ENCODE measurements at regions of chr3 and their contacts with region 1.

Region 1: DNA sequence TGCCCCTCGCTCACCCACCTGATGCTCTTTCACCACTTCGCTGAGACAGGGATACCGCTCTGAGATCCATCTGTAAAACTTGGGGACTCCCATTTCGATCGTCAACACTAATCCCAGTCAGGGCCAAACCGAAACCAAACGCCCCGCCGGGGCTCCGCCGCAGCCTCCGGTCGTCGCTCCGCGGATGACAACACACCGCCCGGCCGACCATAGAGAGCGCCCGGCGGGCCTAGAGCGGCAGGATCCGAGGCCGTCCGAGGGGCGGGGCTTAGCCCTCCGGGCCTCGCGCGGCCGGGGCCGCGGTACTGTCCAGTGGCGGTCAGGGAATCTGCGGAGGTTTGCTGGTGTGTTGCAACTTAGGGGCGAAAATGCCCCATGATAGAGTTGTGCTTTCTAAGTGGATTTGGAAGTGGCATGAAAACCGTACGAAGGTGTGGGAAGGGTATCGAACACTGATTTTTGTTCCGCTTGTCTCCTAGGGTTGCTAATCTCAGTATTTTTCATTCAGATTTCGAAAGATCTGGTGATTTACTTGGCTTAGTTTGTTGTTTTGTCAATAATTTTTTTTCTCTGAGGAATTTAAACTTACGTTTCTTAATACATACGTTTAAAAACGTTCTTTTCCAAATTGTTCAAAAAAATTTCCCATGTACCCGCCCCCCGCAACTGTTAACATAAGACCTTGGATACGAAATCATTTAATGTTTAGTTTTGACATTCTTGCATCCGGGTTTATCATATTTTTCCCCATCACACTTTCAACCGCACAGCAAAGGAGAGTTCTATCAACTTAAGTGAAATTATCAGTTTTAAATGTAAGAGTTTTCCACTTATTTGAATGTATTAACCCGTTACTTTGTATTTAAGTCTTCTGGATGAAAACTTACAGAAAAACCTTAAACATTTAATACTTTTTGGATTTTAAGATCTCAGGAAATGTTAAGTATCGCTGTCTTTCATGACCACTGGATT is at the start of gene XRN1:
- DNase-seq: peak; percentile 98
- ATAC-seq: peak; percentile 85
- H3K4me3 Mint-ChIP-seq: peak within 1 kb of the TSS; percentile 95
- H3K27ac Mint-ChIP-seq: peak within 1 kb of the TSS; percentile 98
- H3K4me1 Mint-ChIP-seq: peaks cover 32% of the 10 kb centered on the region
- H3K27me3 Mint-ChIP-seq: no peaks in the 10 kb centered on the region
- total RNA-seq, gene XRN1: 54.2 to 117 TPM

Region 2: DNA sequence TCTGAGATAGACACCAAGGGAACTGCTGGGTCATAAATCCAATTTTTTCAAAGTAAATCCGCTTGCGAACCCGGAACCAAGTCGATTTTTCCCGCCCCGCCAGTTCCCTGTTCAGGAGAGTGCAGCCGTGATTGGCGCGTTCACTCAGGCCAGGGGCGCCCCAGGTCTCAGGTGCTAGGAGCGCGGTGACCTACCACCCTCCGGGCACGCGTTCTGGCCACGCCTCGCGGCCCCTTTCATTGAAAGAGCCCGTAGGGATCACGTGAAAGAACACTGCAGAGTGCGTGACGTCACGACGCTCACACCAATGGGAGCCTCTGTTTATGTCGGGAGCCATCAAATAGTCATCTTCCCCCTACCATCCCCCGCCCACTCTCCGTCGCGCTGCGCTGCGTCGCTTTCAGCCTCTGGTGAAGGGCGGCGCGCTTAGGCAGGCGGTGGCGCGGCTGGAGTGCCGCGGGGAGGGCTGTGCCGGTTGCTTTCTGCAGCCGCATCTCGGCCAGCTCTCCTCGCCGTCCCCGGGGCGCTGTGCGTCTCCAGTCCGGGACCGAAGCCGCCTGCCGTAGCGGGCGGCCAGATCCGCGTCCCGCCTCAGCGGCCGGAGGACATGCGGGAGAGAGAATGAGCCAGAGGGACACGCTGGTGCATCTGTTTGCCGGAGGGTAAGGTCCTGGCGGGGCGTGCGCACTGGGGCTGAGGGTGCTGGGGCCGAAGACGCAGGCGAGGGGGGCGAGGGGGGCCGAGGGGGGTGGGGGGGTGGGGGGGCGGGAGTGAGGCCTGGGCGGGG is 1506.5 kb before region 1 on chr3 and contains the start of gene SLC25A36:
- CTCF ChIA-PET with region 1: no interaction called
- POLR2A ChIA-PET with region 1: no interaction called
- intact Hi-C with region 1: loop called in 1 of 2 experiments (anchors 5 kb)
- DNase-seq: peak; percentile 99
- ATAC-seq: peak; percentile 98
- H3K4me3 Mint-ChIP-seq: peak within 1 kb of the TSS; percentile 93
- H3K27ac Mint-ChIP-seq: peak within 1 kb of the TSS; percentile 95
- H3K4me1 Mint-ChIP-seq: peaks cover 37% of the 10 kb centered on the region
- H3K27me3 Mint-ChIP-seq: no peaks in the 10 kb centered on the region
- total RNA-seq, gene SLC25A36: 42.3 to 62.3 TPM

Region 3: DNA sequence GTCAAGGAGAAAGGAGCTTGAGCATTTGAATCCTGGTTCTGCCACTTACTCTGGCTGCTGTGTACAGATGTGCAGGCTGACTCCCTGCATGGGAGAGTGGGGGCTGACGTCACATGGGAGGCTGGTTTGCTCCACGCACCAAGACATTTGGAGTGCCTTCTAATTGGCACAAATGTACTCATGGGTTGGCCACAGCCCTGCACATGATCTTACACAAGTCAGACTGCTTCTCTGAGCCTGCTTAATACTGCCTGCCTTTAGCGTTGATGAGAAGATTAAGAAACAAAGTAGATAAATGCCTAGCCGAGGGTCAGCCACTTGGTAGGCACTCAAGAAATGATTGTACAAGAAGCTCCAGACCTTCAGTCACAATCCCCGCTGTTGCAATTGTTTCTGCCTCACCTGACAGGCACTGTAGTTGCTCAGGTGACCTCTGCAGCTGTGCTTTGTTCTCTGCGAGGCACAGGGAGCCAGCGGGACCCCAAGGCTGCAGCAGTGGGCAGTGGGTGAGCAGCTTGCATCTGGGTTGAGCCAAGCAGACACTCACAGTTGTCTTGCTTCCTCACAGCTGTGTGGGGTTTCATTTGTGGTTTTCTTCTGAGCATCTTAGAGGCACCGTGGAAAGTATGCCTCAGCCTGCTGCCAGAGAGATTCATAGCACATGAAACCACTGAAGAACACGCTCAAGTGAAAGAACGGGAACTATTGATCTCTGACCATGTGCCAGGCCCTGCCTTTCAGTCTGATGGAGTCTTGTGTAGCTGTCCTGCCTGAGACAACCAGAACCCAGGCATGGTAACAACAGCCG is 651.9 kb before region 1 on chr3:
- CTCF ChIA-PET with region 1: no interaction called
- POLR2A ChIA-PET with region 1: no interaction called
- intact Hi-C with region 1: loop called in 1 of 2 experiments (anchors 2 kb)
- DNase-seq: peak; percentile 90
- ATAC-seq: peak; percentile 84
- H3K4me3 Mint-ChIP-seq: peak overlapping the region; percentile 77
- H3K27ac Mint-ChIP-seq: peak overlapping the region; percentile 97
- H3K4me1 Mint-ChIP-seq: peaks cover 52% of the 10 kb centered on the region
- H3K27me3 Mint-ChIP-seq: no peaks in the 10 kb centered on the region

Region 4: DNA sequence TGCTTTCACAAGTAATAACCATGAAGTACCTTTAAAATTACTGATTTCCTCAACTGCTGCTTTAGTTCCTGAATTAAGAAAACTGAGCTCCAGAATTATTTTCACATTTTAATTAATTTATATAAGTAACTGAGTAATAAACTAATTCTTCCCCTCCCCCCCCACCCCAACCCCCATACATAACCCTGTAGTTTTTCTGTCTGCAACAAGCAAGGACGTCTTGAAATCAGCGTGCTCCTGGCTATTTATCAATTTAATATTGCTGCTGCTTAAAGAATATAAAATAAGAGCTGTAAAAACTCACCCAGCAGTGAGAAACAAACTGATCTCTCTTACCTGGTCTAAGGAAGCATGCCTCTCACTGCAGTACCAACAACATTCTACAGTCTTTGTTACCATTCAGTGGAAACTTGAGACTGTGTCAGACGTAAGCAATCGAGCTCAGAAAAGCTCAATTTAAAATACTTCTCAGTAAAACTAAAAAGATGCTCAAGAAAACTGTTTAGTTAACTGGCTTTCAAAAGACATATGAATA is 419.8 kb before region 1 on chr3:
- CTCF ChIA-PET with region 1: no interaction called
- POLR2A ChIA-PET with region 1: no interaction called
- intact Hi-C with region 1: loop called in 1 of 2 experiments (anchors 2 kb)
- DNase-seq: peak; percentile 42
- ATAC-seq: peak; percentile 74
- H3K4me3 Mint-ChIP-seq: peak overlapping the region; percentile 83
- H3K27ac Mint-ChIP-seq: peak overlapping the region; percentile 84
- H3K4me1 Mint-ChIP-seq: peaks cover 32% of the 10 kb centered on the region
- H3K27me3 Mint-ChIP-seq: no peaks in the 10 kb centered on the region

Region 5: DNA sequence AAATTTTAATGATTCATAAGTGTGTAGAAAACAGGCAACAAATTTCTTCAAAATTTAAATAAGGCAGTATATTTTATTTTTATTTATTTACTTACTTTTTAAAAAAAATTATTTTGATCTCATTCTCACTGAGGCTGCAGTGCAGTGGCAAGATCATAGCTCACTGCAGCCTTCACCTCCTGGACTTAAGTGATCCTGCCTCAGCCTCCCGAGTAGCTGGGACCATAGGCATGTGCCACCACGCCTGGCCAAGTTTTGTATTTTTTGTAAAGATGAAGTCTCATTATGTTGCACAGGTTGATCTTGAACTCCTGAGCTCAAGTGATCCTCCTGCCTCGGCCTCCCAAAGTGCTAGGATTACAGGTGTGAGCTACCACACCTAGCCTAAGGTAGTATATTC is 60.9 kb after region 1 on chr3:
- CTCF ChIA-PET with region 1: no interaction called
- POLR2A ChIA-PET with region 1: no interaction called
- intact Hi-C with region 1: loop called (anchors 1 to 2 kb)
- DNase-seq: no peak
- ATAC-seq: peak; percentile 25
- H3K4me3 Mint-ChIP-seq: peak overlapping the region; percentile 59
- H3K27ac Mint-ChIP-seq: peak overlapping the region; percentile 83
- H3K4me1 Mint-ChIP-seq: peaks cover 9% of the 10 kb centered on the region
- H3K27me3 Mint-ChIP-seq: no peaks in the 10 kb centered on the region

Region 6: GRCh38 chr3:142595951-142596725 is 148.0 kb after region 1 on chr3 and contains the start of gene PLS1:
- CTCF ChIA-PET with region 1: no interaction called
- POLR2A ChIA-PET with region 1: no interaction called
- intact Hi-C with region 1: loop called in 1 of 2 experiments (anchors 1 kb)
- DNase-seq: peak; percentile 88
- ATAC-seq: peak; percentile 87
- H3K4me3 Mint-ChIP-seq: peak within 1 kb of the TSS; percentile 92
- H3K27ac Mint-ChIP-seq: peak within 1 kb of the TSS; percentile 90
- H3K4me1 Mint-ChIP-seq: peaks cover 16% of the 10 kb centered on the region
- H3K27me3 Mint-ChIP-seq: no peaks in the 10 kb centered on the region
- total RNA-seq, gene PLS1: 5.1 to 5.4 TPM

Region 7: GRCh38 chr3:143001369-143002082 is 553.4 kb after region 1 on chr3 and contains the start of gene U2SURP:
- CTCF ChIA-PET with region 1: no interaction called
- POLR2A ChIA-PET with region 1: interaction called, 13 read pairs
- intact Hi-C with region 1: loop called (anchors 1 kb)
- DNase-seq: peak; percentile 96
- ATAC-seq: peak; percentile 86
- H3K4me3 Mint-ChIP-seq: peak within 1 kb of the TSS; percentile 91
- H3K27ac Mint-ChIP-seq: peak within 1 kb of the TSS; percentile 99
- H3K4me1 Mint-ChIP-seq: peaks cover 40% of the 10 kb centered on the region
- H3K27me3 Mint-ChIP-seq: no peaks in the 10 kb centered on the region
- total RNA-seq, gene U2SURP: 208 to 248 TPM

Measured in activated CD4-positive, alpha-beta T cell treated with anti-CD3 and anti-CD28 coated beads for 36 hours (primary cell).